ENCODE measurements at regions of chr14 and their contacts with region 1.

Region 1: GRCh38 chr14:101083564-101084435 is 180.3 kb upstream of the RTL1 start:
- DNase-seq: peak in 2 of 4 experiments; percentile 33 to 41
- ATAC-seq: peak; percentile 86
- H3K4me3 ChIP-seq: no peak overlapping the region
- H3K27ac ChIP-seq: no peak overlapping the region
- H3K4me1 ChIP-seq: no peaks in the 10 kb centered on the region
- H3K27me3 ChIP-seq: peaks cover 0 to 43% of the 10 kb centered on the region in 2 experiments; a peak in 2 of 5 replicates
- CTCF ChIP-seq: peak; percentile 36 to 55 (median 44); a peak in 5 of 6 replicates
- EP300 ChIP-seq: no peak
- POLR2A ChIP-seq: no peak
- RAD21 ChIP-seq: peak in 1 of 2 experiments; percentile 24; a peak in 1 of 4 replicates

Region 2: DNA sequence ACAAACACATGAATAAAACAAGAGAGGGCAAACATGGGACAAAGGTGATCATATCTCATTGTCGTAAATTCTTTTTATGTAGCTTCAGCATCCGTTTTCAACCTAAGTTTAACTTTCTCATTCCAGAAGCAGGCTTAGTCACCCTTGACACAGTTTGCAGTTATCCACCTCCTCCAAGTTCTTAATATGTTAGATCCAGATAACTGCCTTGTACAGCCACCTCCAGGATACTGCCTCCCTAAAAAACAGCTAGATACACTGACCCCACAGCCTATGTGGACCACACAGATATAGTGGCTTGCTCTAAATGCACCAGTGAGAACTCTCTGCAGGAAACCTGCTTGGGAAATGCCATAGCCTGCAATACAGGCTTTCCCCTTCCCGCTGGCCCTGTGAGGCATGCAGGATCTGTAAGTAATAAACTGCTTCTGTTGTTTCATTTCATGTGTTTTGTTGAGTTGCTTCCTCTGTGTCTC is 169.2 kb before region 1 on chr14:
- CTCF ChIA-PET with region 1: no interaction called
- POLR2A ChIA-PET with region 1: no interaction called
- in situ Hi-C with region 1: loop called (anchors 10 kb)
- intact Hi-C with region 1: loop called (anchors 10 kb)
- DNase-seq: peak in 1 of 4 experiments; percentile 20
- ATAC-seq: no peak
- H3K4me3 ChIP-seq: no peak overlapping the region
- H3K27ac ChIP-seq: no peak overlapping the region
- H3K4me1 ChIP-seq: no peaks in the 10 kb centered on the region
- H3K27me3 ChIP-seq: peaks cover 0 to 7% of the 10 kb centered on the region in 2 experiments; a peak in 1 of 5 replicates
- CTCF ChIP-seq: no peak
- EP300 ChIP-seq: no peak
- POLR2A ChIP-seq: no peak
- RAD21 ChIP-seq: no peak

Region 3: GRCh38 chr14:100988411-100988900 is 95.3 kb before region 1 on chr14:
- CTCF ChIA-PET with region 1: no interaction called
- POLR2A ChIA-PET with region 1: no interaction called
- in situ Hi-C with region 1: no loop called
- intact Hi-C with region 1: no loop called
- DNase-seq: no peak
- ATAC-seq: no peak
- H3K4me3 ChIP-seq: no peak overlapping the region
- H3K27ac ChIP-seq: no peak overlapping the region
- H3K4me1 ChIP-seq: no peaks in the 10 kb centered on the region
- H3K27me3 ChIP-seq: no peaks in the 10 kb centered on the region
- CTCF ChIP-seq: no peak
- EP300 ChIP-seq: no peak
- POLR2A ChIP-seq: no peak
- RAD21 ChIP-seq: no peak

Region 4: GRCh38 chr14:101235335-101236103 is 151.7 kb after region 1 on chr14:
- CTCF ChIA-PET with region 1: no interaction called
- POLR2A ChIA-PET with region 1: no interaction called
- in situ Hi-C with region 1: no loop called
- intact Hi-C with region 1: loop called (anchors 10 kb)
- DNase-seq: peak; percentile 59 to 74 (median 70)
- ATAC-seq: peak; percentile 99
- H3K4me3 ChIP-seq: no peak overlapping the region
- H3K27ac ChIP-seq: no peak overlapping the region
- H3K4me1 ChIP-seq: peaks cover 0 to 11% of the 10 kb centered on the region in 2 experiments; a peak in 1 of 5 replicates
- H3K27me3 ChIP-seq: peaks cover 2 to 31% of the 10 kb centered on the region in 2 experiments; a peak in 2 of 5 replicates
- CTCF ChIP-seq: peak; percentile 65 to 67 (median 65)
- EP300 ChIP-seq: no peak
- POLR2A ChIP-seq: no peak
- RAD21 ChIP-seq: peak; percentile 57 to 73

Region 5: DNA sequence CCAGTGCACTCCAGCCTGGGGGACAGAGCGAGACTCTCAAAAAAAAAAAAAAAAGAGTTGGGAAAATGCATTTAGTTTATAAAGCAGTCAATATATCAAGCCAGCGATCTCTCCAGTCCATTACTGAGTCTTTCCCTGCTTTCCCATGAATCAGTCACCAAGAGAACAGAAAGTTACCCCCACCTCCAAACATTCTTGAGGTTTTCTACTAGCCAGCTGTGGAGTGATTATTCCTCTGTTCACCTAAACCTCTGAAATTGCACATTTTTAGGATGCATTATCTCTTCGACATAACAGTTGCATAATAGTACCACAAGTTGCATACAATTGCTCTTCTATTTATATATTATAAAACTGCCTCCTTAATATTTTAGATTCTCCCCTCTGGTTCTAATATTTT is 342.7 kb after region 1 on chr14:
- CTCF ChIA-PET with region 1: no interaction called
- POLR2A ChIA-PET with region 1: no interaction called
- in situ Hi-C with region 1: no loop called
- intact Hi-C with region 1: no loop called
- DNase-seq: no peak
- ATAC-seq: no peak
- H3K4me3 ChIP-seq: no peak overlapping the region
- H3K27ac ChIP-seq: no peak overlapping the region
- H3K4me1 ChIP-seq: no peaks in the 10 kb centered on the region
- H3K27me3 ChIP-seq: no peaks in the 10 kb centered on the region
- CTCF ChIP-seq: no peak
- EP300 ChIP-seq: no peak
- POLR2A ChIP-seq: no peak
- RAD21 ChIP-seq: no peak